IMR-90 (cell line): ENCODE measurements at regions of chr11 and their contacts with region 1.

Region 1: GRCh38 chr11:12331239-12331874 is 46.0 kb upstream of the PARVA start:
- DNase-seq: peak; percentile 88
- ATAC-seq: peak; percentile 97
- H3K4me3 ChIP-seq: no peak overlapping the region
- H3K27ac ChIP-seq: no peak overlapping the region
- H3K4me1 ChIP-seq: peaks cover 4% of the 10 kb centered on the region
- H3K27me3 ChIP-seq: no peaks in the 10 kb centered on the region
- CTCF ChIP-seq: peak; percentile 94
- POLR2A ChIP-seq: 0 out of 2 replicates have a peak, but pooled peaks have one; percentile 42
- RAD21 ChIP-seq: peak; percentile 98

Region 2: GRCh38 chr11:12288212-12288930 is 43.0 kb before region 1 on chr11:
- CTCF ChIA-PET with region 1: interaction called, 13 read pairs
- POLR2A ChIA-PET with region 1: interaction called, 3 read pairs
- dilution Hi-C with region 1: no loop called
- in situ Hi-C with region 1: no loop called
- intact Hi-C with region 1: loop called (anchors 2 kb)
- DNase-seq: peak; percentile 94
- ATAC-seq: peak; percentile 21
- H3K4me3 ChIP-seq: no peak overlapping the region
- H3K27ac ChIP-seq: peak overlapping the region; percentile 97
- H3K4me1 ChIP-seq: peaks cover 34% of the 10 kb centered on the region
- H3K27me3 ChIP-seq: no peaks in the 10 kb centered on the region
- CTCF ChIP-seq: peak; percentile 99
- POLR2A ChIP-seq: no peak
- RAD21 ChIP-seq: peak; percentile 98

Region 3: DNA sequence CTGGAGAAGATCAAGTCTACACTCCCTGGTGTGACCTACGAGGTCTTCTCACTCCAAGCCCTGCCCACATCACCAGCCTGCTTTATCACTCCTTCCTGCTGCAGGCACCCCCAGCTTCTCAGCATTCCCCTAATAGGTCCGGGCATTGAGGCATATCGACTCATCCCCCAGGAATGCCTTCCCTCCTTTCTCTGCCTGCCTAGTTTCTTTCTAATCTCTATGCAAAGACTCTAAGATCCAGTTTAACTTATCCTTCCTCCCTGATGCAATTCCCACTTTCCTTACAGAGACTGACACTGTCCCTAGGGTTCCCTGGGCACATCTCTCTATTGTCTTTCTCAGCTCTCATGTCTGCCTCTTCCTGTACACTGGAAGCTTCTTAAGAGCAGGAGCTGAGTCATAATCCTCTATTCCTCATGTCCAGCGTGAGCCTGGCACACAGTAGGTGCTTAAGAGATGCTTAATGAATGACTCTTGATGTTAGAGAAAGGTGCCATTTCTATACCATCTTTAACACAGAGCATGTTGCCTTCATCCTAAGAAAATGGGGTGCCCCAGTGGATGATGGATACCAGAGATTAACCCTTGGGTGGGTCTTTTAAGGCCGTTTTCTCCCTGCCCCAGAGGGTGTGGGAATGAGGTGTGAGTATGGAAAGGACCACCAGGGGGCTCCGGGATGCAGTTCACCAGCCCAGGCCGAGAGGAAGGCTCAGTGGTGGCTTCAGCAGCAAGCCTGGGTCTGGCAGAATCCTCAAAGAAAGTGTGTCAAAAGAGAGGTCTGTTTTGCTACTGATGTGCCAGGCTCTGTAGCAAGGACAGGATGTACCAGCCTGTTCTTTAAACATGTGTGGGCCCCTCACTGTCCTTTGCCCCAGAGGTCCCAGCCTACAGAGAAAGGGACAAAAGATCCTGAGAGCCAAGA is 80.7 kb after region 1 on chr11:
- CTCF ChIA-PET with region 1: interaction called, 8 read pairs
- POLR2A ChIA-PET with region 1: no interaction called
- dilution Hi-C with region 1: no loop called
- in situ Hi-C with region 1: no loop called
- intact Hi-C with region 1: loop called (anchors 1 kb)
- DNase-seq: peak; percentile 95
- ATAC-seq: peak; percentile 80
- H3K4me3 ChIP-seq: peak overlapping the region; percentile 2; the same call in 1 of the 2 replicates
- H3K27ac ChIP-seq: peak overlapping the region; percentile 95
- H3K4me1 ChIP-seq: peaks cover 54% of the 10 kb centered on the region
- H3K27me3 ChIP-seq: no peaks in the 10 kb centered on the region
- CTCF ChIP-seq: peak; percentile 85
- POLR2A ChIP-seq: no peak
- RAD21 ChIP-seq: peak; percentile 84

Region 4: DNA sequence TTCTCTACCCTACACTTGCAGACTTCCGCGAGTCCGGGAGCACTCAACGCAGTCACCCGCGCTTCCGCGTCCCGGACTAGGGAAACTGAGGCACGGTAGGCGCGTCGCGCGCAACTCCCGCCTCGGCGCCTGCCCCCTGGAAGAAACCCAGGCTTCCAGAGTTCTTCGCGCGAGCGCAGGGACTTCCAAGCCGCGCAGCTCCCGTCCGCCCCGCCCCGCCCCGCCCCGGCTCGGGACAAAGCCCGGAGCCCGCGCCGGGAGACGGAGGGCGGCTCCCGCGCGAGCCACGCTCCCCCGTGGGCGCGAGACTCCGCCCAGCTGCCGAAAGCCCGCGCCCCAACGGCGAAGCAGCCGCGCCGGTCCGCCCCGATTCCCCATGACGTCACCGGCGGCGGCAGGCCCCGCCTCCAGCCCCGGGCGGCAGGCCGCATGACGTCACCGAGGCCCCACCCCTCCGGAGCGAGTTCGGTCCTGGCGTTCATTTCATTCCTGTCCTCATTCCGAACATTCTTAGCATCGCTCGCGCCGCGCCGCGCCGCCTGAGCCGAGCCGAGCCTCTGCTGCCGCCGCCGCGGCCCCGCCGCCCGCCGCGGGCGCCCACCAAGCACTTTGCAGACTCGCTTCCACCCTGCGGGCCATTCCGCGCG is 342.7 kb after region 1 on chr11 and contains the start of gene TEAD1:
- CTCF ChIA-PET with region 1: interaction called, 4 read pairs
- POLR2A ChIA-PET with region 1: no interaction called
- dilution Hi-C with region 1: no loop called
- in situ Hi-C with region 1: no loop called
- intact Hi-C with region 1: loop called (anchors 2 kb)
- DNase-seq: peak; percentile 95
- ATAC-seq: peak; percentile 90
- H3K4me3 ChIP-seq: peak within 1 kb of the TSS; percentile 78
- H3K27ac ChIP-seq: peak within 1 kb of the TSS; percentile 100
- H3K4me1 ChIP-seq: peaks cover 3% of the 10 kb centered on the region
- H3K27me3 ChIP-seq: no peaks in the 10 kb centered on the region
- CTCF ChIP-seq: no peak
- POLR2A ChIP-seq: peak; percentile 55
- RAD21 ChIP-seq: no peak
- total RNA-seq, gene TEAD1: 69.2 and 95.5 TPM in 2 replicates

Region 5: GRCh38 chr11:12888525-12889158 is 557.3 kb after region 1 on chr11:
- CTCF ChIA-PET with region 1: interaction called, 14 read pairs
- POLR2A ChIA-PET with region 1: no interaction called
- dilution Hi-C with region 1: no loop called
- in situ Hi-C with region 1: loop called (anchors 10 kb)
- intact Hi-C with region 1: no loop called
- DNase-seq: peak; percentile 90
- ATAC-seq: peak; percentile 75
- H3K4me3 ChIP-seq: no peak overlapping the region
- H3K27ac ChIP-seq: peak overlapping the region; percentile 60; the same call in 1 of the 2 replicates
- H3K4me1 ChIP-seq: peaks cover 22% of the 10 kb centered on the region
- H3K27me3 ChIP-seq: no peaks in the 10 kb centered on the region
- CTCF ChIP-seq: peak; percentile 83
- POLR2A ChIP-seq: 0 out of 2 replicates have a peak, but pooled peaks have one; percentile 22
- RAD21 ChIP-seq: peak; percentile 81

Region 6: GRCh38 chr11:13152736-13153533 is 821.6 kb after region 1 on chr11:
- CTCF ChIA-PET with region 1: no interaction called
- POLR2A ChIA-PET with region 1: no interaction called
- dilution Hi-C with region 1: no loop called
- in situ Hi-C with region 1: no loop called
- intact Hi-C with region 1: loop called (anchors 1 kb)
- DNase-seq: peak; percentile 42
- ATAC-seq: no peak
- H3K4me3 ChIP-seq: no peak overlapping the region
- H3K27ac ChIP-seq: no peak overlapping the region
- H3K4me1 ChIP-seq: no peaks in the 10 kb centered on the region
- H3K27me3 ChIP-seq: peaks cover 31% of the 10 kb centered on the region
- CTCF ChIP-seq: peak; percentile 81
- POLR2A ChIP-seq: no peak
- RAD21 ChIP-seq: peak; percentile 86